ENCODE measurements at regions of chr18 and their contacts with region 1.

Region 1: DNA sequence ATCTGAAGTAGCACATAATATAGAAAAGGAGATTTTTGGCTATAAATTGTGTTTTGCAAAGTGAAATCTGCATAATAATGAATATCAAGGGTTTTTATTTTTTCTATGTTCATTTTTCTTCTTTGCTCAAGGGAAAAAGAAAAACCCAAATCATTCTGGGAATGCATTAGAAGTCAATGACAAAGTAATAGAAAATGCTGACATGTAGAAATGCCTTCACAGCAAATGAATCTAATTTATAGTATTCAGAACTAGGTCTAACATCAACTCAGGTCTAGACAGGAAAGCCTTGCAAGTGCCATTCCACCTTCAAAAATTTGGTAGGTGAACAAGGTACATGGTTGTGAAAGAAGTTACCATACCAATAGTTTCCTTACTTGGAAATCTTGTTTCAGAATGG is 831.5 kb upstream of the CELF4 start:
- DNase-seq: no peak
- ATAC-seq: no peak
- H3K4me3 ChIP-seq: no peak overlapping the region
- H3K4me3 Mint-ChIP-seq: no peak overlapping the region
- H3K27ac ChIP-seq: no peak overlapping the region
- H3K27ac Mint-ChIP-seq: no peak overlapping the region
- H3K4me1 ChIP-seq: no peaks in the 10 kb centered on the region
- H3K4me1 Mint-ChIP-seq: no peaks in the 10 kb centered on the region
- H3K27me3 ChIP-seq: no peaks in the 10 kb centered on the region
- H3K27me3 Mint-ChIP-seq: no peaks in the 10 kb centered on the region
- CTCF ChIP-seq: no peak

Region 2: DNA sequence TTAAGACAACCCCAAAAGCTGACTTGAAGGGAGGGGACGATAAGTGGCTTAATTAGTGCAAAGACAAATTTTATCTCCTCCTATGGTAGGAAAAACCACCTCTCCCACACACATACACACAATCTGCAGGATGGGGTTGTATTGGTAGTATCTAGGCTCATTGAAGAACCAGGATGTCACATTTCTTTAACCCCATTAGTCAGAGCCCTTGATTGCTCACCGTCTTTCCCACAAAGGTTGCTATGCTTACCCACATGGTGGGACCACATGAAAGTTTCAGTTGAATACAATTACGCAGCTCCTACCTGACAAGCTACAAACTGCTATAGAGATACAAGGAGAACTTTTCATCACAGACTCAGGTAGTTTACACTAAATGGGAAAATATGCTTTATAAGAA is 66.5 kb before region 1 on chr18:
- CTCF ChIA-PET with region 1: no interaction called
- POLR2A ChIA-PET with region 1: no interaction called
- intact Hi-C with region 1: loop called in 1 of 2 experiments (anchors 10 kb)
- DNase-seq: no peak
- ATAC-seq: no peak
- H3K4me3 ChIP-seq: no peak overlapping the region
- H3K4me3 Mint-ChIP-seq: no peak overlapping the region
- H3K27ac ChIP-seq: no peak overlapping the region
- H3K27ac Mint-ChIP-seq: no peak overlapping the region
- H3K4me1 ChIP-seq: no peaks in the 10 kb centered on the region
- H3K4me1 Mint-ChIP-seq: no peaks in the 10 kb centered on the region
- H3K27me3 ChIP-seq: no peaks in the 10 kb centered on the region
- H3K27me3 Mint-ChIP-seq: no peaks in the 10 kb centered on the region
- CTCF ChIP-seq: no peak

Region 3: DNA sequence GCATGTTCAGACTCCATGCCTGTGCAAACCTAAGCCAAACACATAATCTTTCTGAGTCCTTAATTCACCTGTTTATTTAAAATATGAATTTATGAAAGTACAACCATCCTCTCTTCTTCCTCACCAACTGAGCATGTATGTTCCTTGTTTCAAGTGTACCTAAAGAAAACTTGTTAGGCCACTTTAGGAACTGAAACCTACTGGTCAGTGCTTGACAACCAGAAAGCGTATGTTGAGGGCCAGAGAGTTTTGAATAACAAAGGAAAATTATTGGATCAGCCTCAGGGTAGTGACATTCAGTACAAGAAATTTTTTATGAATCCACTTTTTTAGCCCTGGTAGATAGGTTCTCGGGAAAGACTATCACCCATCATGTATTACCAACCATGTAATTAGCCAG is 16.1 kb after region 1 on chr18:
- CTCF ChIA-PET with region 1: no interaction called
- POLR2A ChIA-PET with region 1: no interaction called
- intact Hi-C with region 1: no loop called
- DNase-seq: no peak
- ATAC-seq: no peak
- H3K4me3 ChIP-seq: no peak overlapping the region
- H3K4me3 Mint-ChIP-seq: no peak overlapping the region
- H3K27ac ChIP-seq: no peak overlapping the region
- H3K27ac Mint-ChIP-seq: no peak overlapping the region
- H3K4me1 ChIP-seq: no peaks in the 10 kb centered on the region
- H3K4me1 Mint-ChIP-seq: no peaks in the 10 kb centered on the region
- H3K27me3 ChIP-seq: no peaks in the 10 kb centered on the region
- H3K27me3 Mint-ChIP-seq: no peaks in the 10 kb centered on the region
- CTCF ChIP-seq: no peak